ENCODE measurements at regions of chr5 and their contacts with region 1.

Region 1: GRCh38 chr5:138503487-138504270 is 38.4 kb downstream of the EGR1 start:
- DNase-seq: no peak

Region 2: GRCh38 chr5:138438724-138439476 is 64.8 kb before region 1 on chr5 and contains the start of gene REEP2:
- intact Hi-C with region 1: no loop called
- DNase-seq: no peak
- total RNA-seq, gene REEP2: 12.5 to 13.0 TPM

Region 3: DNA sequence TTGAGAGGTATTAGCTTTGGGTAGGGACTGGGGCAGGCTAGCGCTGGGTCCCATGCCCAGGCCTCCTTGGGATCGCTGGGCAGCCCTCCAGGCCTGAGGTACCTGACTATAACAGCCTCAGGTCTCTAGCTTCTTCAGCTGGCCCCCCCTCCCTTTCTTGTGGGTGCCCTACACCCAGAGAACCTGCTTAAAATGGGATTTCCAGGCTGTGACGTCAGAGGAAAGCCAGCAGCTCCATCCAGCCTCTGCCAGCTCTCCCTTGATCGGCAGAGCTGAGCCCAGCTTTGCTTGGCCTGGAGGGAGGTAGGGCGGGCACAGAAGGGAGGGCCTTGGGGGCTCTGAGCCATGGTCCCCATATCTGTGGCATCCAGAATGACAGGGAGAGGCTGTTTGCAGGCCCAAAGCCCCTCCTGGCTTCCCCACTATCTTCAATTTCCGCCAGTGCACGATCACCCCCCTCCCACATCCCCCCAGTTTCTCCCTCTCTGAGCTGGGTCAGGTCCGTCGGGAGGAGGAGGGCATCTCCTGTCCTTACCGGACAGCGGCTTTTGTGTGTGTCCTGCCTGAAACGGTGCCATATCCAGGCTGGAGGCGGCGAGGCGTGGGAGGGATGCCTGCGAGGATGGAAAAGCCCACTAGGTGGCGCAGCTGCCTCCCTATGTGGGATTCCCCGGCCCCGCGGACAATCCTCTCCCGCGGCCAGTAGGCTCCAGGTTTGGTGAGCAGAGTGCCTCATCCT is 54.0 kb before region 1 on chr5:
- intact Hi-C with region 1: loop called (anchors 2 kb)
- DNase-seq: peak; percentile 96

Region 4: GRCh38 chr5:138482638-138483037 is 21.0 kb before region 1 on chr5:
- intact Hi-C with region 1: no loop called
- DNase-seq: no peak

Region 5: DNA sequence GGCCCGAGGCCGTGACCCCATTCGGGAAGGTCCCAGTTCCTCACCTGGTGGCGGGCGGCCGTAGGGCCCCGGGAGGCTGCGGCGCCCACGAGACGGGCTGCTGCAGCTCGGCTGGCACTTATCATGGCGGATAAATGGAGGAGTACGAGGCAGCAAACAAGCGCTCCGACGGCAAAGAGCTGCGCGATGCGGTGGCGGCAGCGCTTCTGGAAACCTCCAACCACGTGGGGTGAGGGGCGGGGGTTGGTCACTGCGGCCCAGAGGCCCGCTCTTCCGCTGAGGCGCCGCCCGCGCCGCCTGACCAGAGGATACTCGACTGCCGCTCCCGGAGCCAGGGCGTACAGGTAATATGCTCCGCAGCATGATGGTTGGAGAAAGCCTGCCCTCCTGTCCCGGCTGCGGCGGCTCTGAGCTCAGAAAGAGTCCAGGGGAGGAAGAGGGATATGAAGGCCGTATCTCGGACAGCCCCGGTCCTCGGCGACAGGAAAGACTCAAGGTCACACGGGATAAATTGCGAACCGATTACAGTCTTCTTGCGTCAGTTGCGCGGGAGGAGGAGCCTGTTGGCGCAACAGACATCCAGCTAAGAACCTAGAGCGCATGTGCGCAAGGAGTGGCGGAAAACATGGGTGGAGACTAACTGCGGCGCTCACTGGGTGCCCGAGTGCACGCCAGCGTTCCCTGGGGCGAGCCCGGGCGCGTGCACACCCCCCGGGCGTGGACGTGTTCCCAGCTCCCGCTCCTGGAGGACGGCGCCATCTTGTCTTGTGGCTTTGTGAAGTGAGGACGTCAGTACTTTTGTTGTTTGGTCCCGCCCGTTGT is 71.7 kb after region 1 on chr5 and contains the start of gene HSPA9:
- intact Hi-C with region 1: no loop called
- DNase-seq: peak; percentile 99
- total RNA-seq, gene HSPA9: 141 to 160 TPM

Region 6: GRCh38 chr5:139689631-139690063 is 1186.0 kb after region 1 on chr5:
- intact Hi-C with region 1: no loop called
- DNase-seq: no peak

Measured in posterior vena cava (tissue), 2 donors.